IMR-90 (cell line): ENCODE measurements at regions of chr11 and their contacts with region 1.

Region 1: DNA sequence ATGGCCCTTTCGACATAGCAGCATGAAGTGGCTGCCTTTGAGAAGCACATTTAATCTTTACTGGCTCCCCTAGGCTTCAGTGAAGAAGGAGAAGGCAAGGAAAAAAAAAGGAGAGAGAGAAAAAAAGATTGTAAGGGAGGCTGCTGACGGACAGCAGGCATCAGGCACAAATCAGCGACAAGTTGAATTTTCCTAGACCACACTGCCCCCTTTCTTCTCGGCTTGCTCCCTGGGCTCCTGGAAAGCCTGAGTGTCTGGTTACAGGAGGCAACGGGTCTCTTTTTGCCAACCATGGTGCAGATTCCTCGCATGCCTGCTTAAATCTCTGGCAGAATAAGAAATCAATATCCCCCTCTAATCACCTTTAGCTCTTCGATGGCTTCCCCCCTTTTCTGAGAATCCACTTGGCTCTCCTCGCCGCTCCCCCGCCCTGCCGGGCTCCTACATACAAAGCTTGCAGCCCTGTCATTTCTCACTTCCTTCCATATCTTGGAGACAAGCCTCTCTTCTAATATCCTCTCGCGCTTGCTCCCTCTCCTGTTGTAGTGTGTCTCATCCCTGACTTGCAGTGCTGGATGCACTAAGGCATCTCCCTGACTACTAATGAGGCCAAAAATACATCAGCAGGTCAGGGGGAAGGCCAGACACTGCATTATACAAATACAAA is 14.3 kb downstream of the BLID start:
- DNase-seq: peak; percentile 85
- ATAC-seq: peak; percentile 36
- H3K4me3 ChIP-seq: peak overlapping the region; percentile 91
- H3K27ac ChIP-seq: peak overlapping the region; percentile 95
- H3K4me1 ChIP-seq: peaks cover 11% of the 10 kb centered on the region
- H3K27me3 ChIP-seq: no peaks in the 10 kb centered on the region
- CTCF ChIP-seq: peak; percentile 55
- POLR2A ChIP-seq: peak; percentile 51
- RAD21 ChIP-seq: peak; percentile 61

Region 2: GRCh38 chr11:121300313-121300971 is 801.3 kb before region 1 on chr11:
- CTCF ChIA-PET with region 1: no interaction called
- POLR2A ChIA-PET with region 1: no interaction called
- dilution Hi-C with region 1: no loop called
- in situ Hi-C with region 1: no loop called
- intact Hi-C with region 1: no loop called
- DNase-seq: no peak
- ATAC-seq: no peak
- H3K4me3 ChIP-seq: no peak overlapping the region
- H3K27ac ChIP-seq: no peak overlapping the region
- H3K4me1 ChIP-seq: no peaks in the 10 kb centered on the region
- H3K27me3 ChIP-seq: no peaks in the 10 kb centered on the region
- CTCF ChIP-seq: no peak
- POLR2A ChIP-seq: no peak
- RAD21 ChIP-seq: no peak

Region 3: GRCh38 chr11:121655537-121656327 is 446.0 kb before region 1 on chr11:
- CTCF ChIA-PET with region 1: no interaction called
- POLR2A ChIA-PET with region 1: interaction called, 7 read pairs
- dilution Hi-C with region 1: no loop called
- in situ Hi-C with region 1: loop called (anchors 5 kb)
- intact Hi-C with region 1: loop called (anchors 1 kb)
- DNase-seq: peak; percentile 99
- ATAC-seq: peak; percentile 88
- H3K4me3 ChIP-seq: peak overlapping the region; percentile 28
- H3K27ac ChIP-seq: peak overlapping the region; percentile 97
- H3K4me1 ChIP-seq: peaks cover 28% of the 10 kb centered on the region
- H3K27me3 ChIP-seq: no peaks in the 10 kb centered on the region
- CTCF ChIP-seq: peak; percentile 97
- POLR2A ChIP-seq: peak; percentile 64; the same call in 1 of the 2 replicates
- RAD21 ChIP-seq: peak; percentile 99

Region 4: DNA sequence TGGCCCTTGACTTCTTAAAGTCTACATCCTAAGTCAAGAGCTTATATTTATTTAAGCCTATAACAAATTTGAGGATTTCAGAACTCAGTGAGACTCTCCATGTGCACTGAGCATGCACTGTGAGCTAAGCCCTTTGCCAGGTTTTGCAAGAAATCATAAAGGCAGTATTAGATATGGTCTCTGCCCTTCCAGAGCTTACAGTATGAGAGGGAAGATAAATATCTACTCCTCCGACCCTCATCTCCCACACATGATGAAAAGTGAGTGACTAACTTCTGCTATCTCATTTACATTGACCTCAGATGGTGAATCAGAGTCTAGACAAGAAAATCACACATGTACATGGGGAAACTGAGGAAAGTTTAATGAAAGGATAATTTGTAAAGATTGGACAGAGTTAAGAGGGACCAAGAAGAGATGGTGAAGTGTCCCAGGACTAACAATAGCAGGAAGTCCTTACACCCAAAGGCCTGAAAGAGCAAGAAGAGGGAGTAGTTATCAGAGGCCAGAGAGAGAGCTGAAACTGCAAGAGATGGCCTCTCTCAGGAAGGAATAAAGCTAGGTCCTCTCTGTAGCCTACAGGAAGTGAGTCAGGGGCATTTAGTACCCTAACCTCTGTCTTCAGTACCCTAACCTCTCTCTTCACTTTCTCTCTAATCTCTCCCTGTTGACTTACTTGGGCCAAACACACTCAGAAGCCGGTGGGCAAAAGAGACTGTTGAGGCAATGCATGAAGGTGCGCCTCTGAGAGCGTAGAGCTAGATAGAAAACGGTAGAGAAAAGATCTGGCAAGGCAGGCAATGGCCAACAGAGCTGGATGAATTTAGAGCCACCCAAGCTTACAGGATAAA is 37.2 kb after region 1 on chr11:
- CTCF ChIA-PET with region 1: no interaction called
- POLR2A ChIA-PET with region 1: interaction called, 15 read pairs
- dilution Hi-C with region 1: no loop called
- in situ Hi-C with region 1: no loop called
- intact Hi-C with region 1: no loop called
- DNase-seq: peak; percentile 56
- ATAC-seq: peak; percentile 22
- H3K4me3 ChIP-seq: no peak overlapping the region
- H3K27ac ChIP-seq: peak overlapping the region; percentile 88
- H3K4me1 ChIP-seq: peaks cover 14% of the 10 kb centered on the region
- H3K27me3 ChIP-seq: no peaks in the 10 kb centered on the region
- CTCF ChIP-seq: no peak
- POLR2A ChIP-seq: no peak
- RAD21 ChIP-seq: no peak

Region 5: GRCh38 chr11:122197055-122197987 is 95.6 kb after region 1 on chr11:
- CTCF ChIA-PET with region 1: no interaction called
- POLR2A ChIA-PET with region 1: interaction called, 10 read pairs
- dilution Hi-C with region 1: no loop called
- in situ Hi-C with region 1: loop called (anchors 10 kb)
- intact Hi-C with region 1: loop called (anchors 2 kb)
- DNase-seq: peak; percentile 99
- ATAC-seq: peak; percentile 79
- H3K4me3 ChIP-seq: no peak overlapping the region
- H3K27ac ChIP-seq: peak overlapping the region; percentile 97
- H3K4me1 ChIP-seq: peaks cover 30% of the 10 kb centered on the region
- H3K27me3 ChIP-seq: no peaks in the 10 kb centered on the region
- CTCF ChIP-seq: no peak
- POLR2A ChIP-seq: 0 out of 2 replicates have a peak, but pooled peaks have one; percentile 36
- RAD21 ChIP-seq: no peak